ENCODE measurements at regions of chr7 and their contacts with region 1.

Region 1: DNA sequence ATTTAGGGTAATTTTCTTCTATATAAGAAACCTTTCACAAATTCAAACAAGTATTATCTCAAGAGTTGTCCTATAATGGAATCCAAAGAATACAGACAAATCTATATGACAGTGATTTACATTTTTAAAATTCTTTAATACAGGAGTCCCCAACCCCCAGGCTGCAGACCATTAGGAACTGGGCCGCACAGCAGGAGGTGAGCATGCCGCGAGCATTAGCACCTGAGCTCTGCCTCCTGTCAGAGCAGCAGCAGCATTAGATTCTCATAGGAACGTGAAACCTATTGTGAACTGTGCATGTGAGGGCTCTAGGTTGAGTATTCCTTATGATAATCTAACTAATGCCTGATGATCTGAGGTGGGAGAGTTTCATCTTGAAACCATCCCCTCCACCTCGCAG is 37.7 kb downstream of the SNX13 start:
- DNase-seq: no peak

Region 2: DNA sequence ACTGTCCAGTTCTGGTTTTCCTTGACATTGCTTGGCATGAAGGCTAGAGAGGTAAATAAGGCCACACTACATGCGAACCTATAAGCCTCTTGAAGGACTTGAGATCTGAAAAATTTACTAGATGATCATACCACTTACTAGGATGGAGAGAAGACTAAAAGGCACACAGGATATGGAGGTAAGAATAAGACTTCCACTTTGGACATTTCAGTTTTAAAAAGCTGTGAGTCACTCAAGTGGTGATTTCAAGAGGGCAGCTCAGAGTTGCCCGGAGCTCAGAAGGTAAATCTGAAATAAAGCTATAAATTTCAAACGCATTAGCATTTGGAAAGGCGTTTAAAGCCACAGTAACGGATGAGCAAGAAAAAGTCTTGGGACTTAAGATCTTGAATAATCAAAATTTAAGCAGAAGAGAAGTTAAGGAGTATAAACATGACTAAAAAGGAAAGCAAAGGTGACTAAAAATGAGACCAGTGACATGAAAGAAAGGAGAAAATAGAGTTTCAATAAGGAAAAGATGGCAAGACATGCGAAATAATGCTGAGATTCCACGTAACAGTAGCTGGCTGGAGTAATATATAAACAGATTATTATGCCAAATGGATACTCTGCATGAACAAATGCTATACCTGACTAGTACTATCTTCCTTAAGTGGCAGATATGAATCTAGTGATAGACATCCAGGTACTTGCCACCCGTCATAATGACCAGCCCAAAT is 30.6 kb before region 1 on chr7:
- intact Hi-C with region 1: loop called (anchors 1 kb)
- DNase-seq: no peak